Heart left ventricle (tissue), 16 donors: ENCODE measurements at regions of chr3 and their contacts with region 1.

Region 1: DNA sequence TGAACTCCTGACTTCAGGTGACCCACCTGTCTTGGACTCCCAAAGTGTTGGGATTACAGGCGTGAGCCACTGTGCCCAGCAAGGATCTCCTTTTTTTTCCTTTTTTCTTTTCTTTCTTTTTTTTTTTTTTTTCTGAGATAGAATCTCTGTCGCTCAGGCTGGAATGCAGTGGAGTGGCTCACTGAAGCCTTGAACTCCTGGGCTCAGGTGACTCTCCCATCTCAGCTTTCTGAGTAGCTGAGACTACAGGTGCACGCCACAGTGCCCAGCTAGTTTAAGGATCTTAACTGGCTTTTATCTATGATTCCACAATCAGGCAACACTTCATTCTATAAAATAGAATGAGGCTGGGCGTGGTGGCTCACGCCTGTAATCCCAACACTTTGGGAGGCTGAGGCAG is 16.3 kb upstream of the NICN1 start:
- DNase-seq: no peak
- ATAC-seq: no peak
- H3K4me3 ChIP-seq: no peak overlapping the region
- H3K27ac ChIP-seq: peak overlapping the region in 1 of 12 donors; percentile 82
- H3K4me1 ChIP-seq: peaks cover 0 to 34% (median 6%) of the 10 kb centered on the region in 12 donors
- H3K27me3 ChIP-seq: no peaks in the 10 kb centered on the region
- CTCF ChIP-seq: no peak
- POLR2A ChIP-seq: no peak

Region 2: GRCh38 chr3:48989796-48990635 is 455.4 kb before region 1 on chr3 and contains the start of gene P4HTM:
- intact Hi-C with region 1: loop called in 7 of 10 experiments (anchors 5 to 10 kb)
- DNase-seq: peak; percentile 87 to 92 (median 91)
- ATAC-seq: peak; percentile 67 to 91 (median 88)
- H3K4me3 ChIP-seq: peak within 1 kb of the TSS; percentile 63 to 95 (median 87)
- H3K27ac ChIP-seq: peak within 1 kb of the TSS; percentile 68 to 98 (median 90)
- H3K4me1 ChIP-seq: peaks cover 0 to 36% (median 22%) of the 10 kb centered on the region in 12 donors
- H3K27me3 ChIP-seq: no peaks in the 10 kb centered on the region
- CTCF ChIP-seq: peak in 9 of 12 donors; percentile 22 to 61 (median 40)
- POLR2A ChIP-seq: peak in 1 of 2 donors; percentile 51
- total RNA-seq, gene P4HTM: 22.1 to 42.7 (median 34.0) TPM

Region 3: DNA sequence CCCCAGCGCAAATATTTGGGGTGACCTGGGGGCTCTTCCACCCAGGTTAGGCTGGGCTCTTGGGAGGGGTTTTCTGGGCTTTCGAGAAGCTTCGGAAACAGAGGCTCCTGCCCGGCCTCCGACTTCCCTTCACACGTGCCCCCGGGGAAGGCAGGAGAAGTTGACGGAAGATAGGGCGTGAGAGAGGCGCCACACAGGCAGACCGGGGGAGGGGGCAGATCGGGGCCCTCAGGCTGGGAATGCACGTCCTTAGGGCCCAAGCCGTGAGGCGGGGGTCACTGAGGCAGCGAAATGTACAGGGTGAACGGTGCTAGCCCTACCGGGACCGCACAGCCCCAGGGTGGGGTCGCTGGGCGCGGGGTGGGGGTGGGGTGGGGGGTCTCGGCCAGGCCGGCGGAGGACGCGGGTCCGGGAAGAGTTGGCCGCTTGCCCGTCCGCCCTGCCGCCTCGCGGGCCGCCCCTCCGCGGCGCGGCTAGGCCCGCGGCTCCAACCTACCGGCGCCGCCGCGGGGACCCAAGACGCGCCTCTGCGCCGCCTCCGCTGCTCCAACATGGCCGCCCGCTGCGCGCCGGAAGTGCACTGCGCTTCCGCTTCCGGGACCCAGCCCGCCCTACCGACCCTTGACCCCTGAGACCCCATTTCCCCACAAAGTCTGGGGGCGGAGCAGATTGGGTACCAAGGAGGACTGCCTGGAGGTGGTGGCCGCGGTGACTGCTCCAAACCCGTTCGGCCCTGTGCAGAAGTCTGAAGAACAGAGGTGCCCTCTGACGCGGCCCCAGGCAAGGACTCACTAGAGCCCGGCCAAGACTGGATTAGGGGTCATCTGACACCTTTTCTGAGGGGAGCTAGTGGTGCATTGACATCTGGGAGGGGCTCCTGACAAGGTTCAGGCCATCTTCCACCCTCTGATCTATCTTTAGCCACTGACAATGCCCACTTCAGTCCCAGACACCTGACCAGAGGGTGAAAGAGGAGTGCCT is 279.3 kb before region 1 on chr3 and contains the start of gene CCDC71:
- intact Hi-C with region 1: loop called in 7 of 10 experiments (anchors 2 to 10 kb)
- DNase-seq: peak; percentile 79 to 90 (median 83)
- ATAC-seq: peak; percentile 43 to 80 (median 75)
- H3K4me3 ChIP-seq: peak within 1 kb of the TSS; percentile 78 to 99 (median 89)
- H3K27ac ChIP-seq: peak within 1 kb of the TSS; percentile 82 to 96 (median 91)
- H3K4me1 ChIP-seq: peaks cover 0 to 32% (median 24%) of the 10 kb centered on the region in 12 donors
- H3K27me3 ChIP-seq: no peaks in the 10 kb centered on the region
- CTCF ChIP-seq: no peak
- POLR2A ChIP-seq: peak in 1 of 2 donors; percentile 57
- total RNA-seq, gene CCDC71: 9.7 to 24.0 (median 14.6) TPM

Region 4: GRCh38 chr3:49191741-49192140 is 253.6 kb before region 1 on chr3:
- intact Hi-C with region 1: no loop called
- DNase-seq: no peak
- ATAC-seq: peak in 3 of 4 donors; percentile 36 to 59 (median 47)
- H3K4me3 ChIP-seq: no peak overlapping the region
- H3K27ac ChIP-seq: peak overlapping the region in 3 of 12 donors; percentile 8 to 23 (median 18)
- H3K4me1 ChIP-seq: peaks cover 0 to 16% (median 0%) of the 10 kb centered on the region in 12 donors
- H3K27me3 ChIP-seq: no peaks in the 10 kb centered on the region
- CTCF ChIP-seq: no peak
- POLR2A ChIP-seq: no peak

Region 5: DNA sequence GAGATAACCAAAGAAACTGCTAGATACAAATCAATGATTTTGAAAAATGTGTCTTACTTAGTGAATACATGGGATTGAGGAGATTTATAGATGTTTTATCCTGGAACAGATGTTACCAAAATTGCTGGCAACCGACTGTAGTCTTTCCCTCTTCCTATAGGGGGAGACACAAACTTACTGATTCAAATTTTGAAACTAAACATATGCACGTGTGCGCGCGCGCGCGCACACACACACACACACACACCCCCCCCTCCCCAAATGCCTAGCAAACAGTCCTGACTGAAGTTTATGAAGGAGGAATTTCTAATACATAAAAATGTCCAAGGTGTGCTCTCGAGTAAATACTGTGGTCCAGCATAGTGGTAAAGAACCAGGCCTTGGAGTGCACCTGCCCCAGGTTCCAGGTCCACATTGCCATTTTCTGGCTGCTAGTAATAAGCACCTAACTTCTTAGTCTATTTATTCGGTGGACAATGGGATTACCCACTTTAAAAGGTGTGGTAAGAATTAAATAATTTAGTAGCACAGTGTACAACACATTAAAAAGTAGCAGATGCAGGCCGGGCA is 149.8 kb before region 1 on chr3:
- intact Hi-C with region 1: loop called in 7 of 10 experiments (anchors 1 to 5 kb)
- DNase-seq: no peak
- ATAC-seq: peak in 1 of 4 donors; percentile 12
- H3K4me3 ChIP-seq: no peak overlapping the region
- H3K27ac ChIP-seq: peak overlapping the region in 7 of 12 donors; percentile 75 to 85 (median 84)
- H3K4me1 ChIP-seq: peaks cover 7 to 24% (median 19%) of the 10 kb centered on the region in 12 donors
- H3K27me3 ChIP-seq: no peaks in the 10 kb centered on the region
- CTCF ChIP-seq: peak; percentile 35 to 63 (median 51)
- POLR2A ChIP-seq: no peak

Region 6: DNA sequence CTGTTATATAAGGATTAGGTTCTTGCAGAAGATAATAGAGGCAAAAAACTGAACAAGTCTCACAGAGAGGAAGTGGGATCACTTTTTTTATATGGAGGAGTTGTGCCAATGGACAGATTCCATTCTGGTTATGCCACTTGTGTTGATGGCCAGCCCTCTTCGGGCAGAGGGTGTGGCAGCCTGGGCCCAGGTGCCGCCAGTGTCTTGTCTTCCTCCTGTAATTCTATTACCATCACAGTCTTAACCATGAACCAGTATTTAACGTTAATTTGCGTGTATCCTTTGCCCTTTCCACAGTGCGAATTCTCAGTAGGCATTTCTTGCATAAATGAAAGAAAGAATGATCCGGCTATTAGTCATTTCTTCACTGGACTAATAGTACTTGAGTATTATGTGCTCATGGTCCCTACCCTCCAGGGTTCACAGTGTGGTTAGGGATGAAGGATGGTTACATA is 98.6 kb before region 1 on chr3:
- intact Hi-C with region 1: loop called in 7 of 10 experiments (anchors 5 kb)
- DNase-seq: no peak
- ATAC-seq: no peak
- H3K4me3 ChIP-seq: no peak overlapping the region
- H3K27ac ChIP-seq: peak overlapping the region in 5 of 12 donors; percentile 79 to 94 (median 84)
- H3K4me1 ChIP-seq: peaks cover 0 to 94% (median 7%) of the 10 kb centered on the region in 12 donors
- H3K27me3 ChIP-seq: no peaks in the 10 kb centered on the region
- CTCF ChIP-seq: no peak
- POLR2A ChIP-seq: no peak